ENCODE measurements at regions of chrX and their contacts with region 1.

Region 1: GRCh38 chrX:40755291-40756249 is 20.2 kb upstream of the MED14 start:
- DNase-seq: peak; percentile 58
- ATAC-seq: peak; percentile 91

Region 2: DNA sequence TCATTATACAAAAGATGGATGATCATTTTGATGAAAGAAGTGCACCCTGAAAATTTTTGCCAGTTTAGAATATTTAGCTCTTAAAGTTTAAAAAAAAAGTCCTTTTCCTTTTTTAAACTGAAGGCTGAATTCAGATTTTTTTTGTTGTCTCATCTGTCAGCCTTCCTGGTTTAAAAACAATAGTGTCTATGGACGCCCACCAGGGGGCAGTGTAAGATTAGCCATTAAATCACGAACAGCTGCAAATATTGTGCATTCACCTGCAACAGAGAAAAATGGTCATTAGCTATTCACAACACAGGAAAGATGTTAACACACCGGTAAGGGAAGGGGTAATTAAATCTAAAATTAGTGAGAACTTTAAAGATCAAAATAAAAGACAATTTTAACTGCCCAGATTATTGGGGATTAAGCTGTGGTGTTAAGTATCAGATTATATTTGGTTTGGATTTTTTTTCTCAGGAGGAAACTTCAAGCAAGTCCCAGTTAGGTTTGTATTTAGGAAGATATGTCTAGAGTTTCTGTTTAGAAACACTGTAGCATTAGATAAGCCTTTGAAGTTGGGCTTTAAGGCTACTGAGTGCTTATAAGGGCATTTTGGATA is 103.8 kb before region 1 on chrX:
- intact Hi-C with region 1: no loop called
- DNase-seq: no peak
- ATAC-seq: no peak

Region 3: GRCh38 chrX:40735325-40736169 is 20.0 kb before region 1 on chrX and contains the start of gene MED14:
- intact Hi-C with region 1: loop called (anchors 1 kb)
- DNase-seq: peak; percentile 89
- ATAC-seq: peak; percentile 99
- total RNA-seq, gene MED14: 26.3 TPM

Measured in Right ventricle myocardium inferior (tissue), 1 donor.